Caco-2 (cell line): ENCODE measurements at regions of chr1 and their contacts with region 1.

Region 1: DNA sequence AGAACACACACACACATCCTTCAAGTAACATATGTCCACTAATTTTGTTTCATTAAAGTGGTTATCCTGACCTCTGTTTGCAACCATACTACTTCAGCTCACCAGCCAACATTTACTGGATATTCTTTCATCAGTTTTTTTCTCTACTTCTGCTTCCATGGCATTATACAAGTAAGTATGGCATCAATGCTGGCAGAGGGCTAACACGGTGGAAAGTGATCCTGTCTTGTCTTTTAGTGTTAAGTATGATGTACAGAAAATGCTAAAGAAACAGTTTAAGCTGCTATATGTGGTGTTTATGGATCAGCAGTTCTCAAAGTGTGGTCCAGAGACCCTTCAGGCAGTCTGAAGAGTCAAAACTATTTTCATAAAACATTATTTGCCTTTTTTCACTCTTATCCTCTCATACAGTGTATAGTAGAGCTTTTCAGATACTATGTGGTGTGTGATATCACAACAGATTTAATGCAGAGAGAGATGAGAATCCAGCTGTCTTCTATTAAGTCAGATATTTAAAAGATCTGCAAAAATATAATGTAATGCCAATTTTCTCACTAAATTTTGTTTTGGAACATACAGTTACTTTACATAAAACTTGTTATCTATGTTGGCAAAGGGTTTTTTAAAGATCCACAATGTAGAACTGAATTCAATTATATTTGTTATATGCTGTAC is 46.6 kb downstream of the FOXJ3 start:
- DNase-seq: no peak
- H3K4me3 ChIP-seq: no peak overlapping the region
- H3K4me3 Mint-ChIP-seq: no peak overlapping the region
- H3K27ac Mint-ChIP-seq: no peak overlapping the region
- H3K4me1 ChIP-seq: no peaks in the 10 kb centered on the region
- H3K4me1 Mint-ChIP-seq: peaks cover 20% of the 10 kb centered on the region
- H3K27me3 ChIP-seq: no peaks in the 10 kb centered on the region
- H3K27me3 Mint-ChIP-seq: no peaks in the 10 kb centered on the region
- CTCF ChIP-seq: no peak

Region 2: GRCh38 chr1:42311138-42311537 is 22.7 kb after region 1 on chr1:
- CTCF ChIA-PET with region 1: interaction called, 13 read pairs
- POLR2A ChIA-PET with region 1: no interaction called
- intact Hi-C with region 1: no loop called
- DNase-seq: no peak
- H3K4me3 ChIP-seq: no peak overlapping the region
- H3K4me3 Mint-ChIP-seq: no peak overlapping the region
- H3K27ac Mint-ChIP-seq: no peak overlapping the region
- H3K4me1 ChIP-seq: peaks cover 17% of the 10 kb centered on the region; the same call in 1 of the 2 replicates
- H3K4me1 Mint-ChIP-seq: peaks cover 24% of the 10 kb centered on the region
- H3K27me3 ChIP-seq: no peaks in the 10 kb centered on the region
- H3K27me3 Mint-ChIP-seq: no peaks in the 10 kb centered on the region
- CTCF ChIP-seq: no peak